PC-9 (cell line): ENCODE measurements at regions of chr6 and their contacts with region 1.

Region 1: DNA sequence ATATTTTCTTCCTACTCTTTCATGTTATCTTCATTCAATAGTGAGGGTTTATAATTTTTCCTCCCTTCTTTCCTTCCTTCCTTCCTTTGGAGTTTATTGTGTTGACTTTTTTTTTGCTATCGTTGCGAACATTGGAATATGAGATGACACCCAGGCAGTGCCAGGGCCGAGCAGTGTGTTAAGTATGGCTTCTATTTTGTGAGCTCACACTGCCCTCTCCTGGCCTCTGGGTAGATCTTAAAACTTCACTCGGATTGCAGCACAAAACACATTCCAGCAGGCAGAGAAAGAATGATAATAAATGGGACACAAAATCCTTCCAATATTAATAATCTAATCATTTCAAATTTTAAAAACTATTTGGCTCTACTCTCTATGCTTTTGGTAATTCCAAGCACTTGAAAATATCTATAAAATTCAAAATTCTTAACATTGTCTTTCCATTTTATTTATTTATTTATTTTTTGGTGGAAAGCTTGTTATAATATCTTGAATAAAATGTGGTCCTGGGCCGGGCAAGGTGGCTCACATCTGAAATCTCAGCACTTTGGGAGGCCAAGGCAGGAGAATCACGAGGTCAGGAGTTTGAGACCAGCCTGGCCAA is 147.4 kb upstream of the OLIG3 start:
- DNase-seq: peak; percentile 50 to 69
- H3K4me3 ChIP-seq: no peak overlapping the region
- H3K27ac ChIP-seq: no peak overlapping the region
- H3K4me1 ChIP-seq: peaks cover 15% of the 10 kb centered on the region
- H3K27me3 ChIP-seq: no peaks in the 10 kb centered on the region
- CTCF ChIP-seq: peak; percentile 96

Region 2: GRCh38 chr6:136822376-136823127 is 819.0 kb before region 1 on chr6 and contains the start of gene PEX7:
- CTCF ChIA-PET with region 1: no interaction called
- POLR2A ChIA-PET with region 1: no interaction called
- intact Hi-C with region 1: loop called (anchors 10 kb)
- DNase-seq: peak; percentile 81 to 87
- H3K4me3 ChIP-seq: peak within 1 kb of the TSS; percentile 69
- H3K27ac ChIP-seq: peak within 1 kb of the TSS; percentile 47
- H3K4me1 ChIP-seq: peaks cover 15% of the 10 kb centered on the region
- H3K27me3 ChIP-seq: no peaks in the 10 kb centered on the region
- CTCF ChIP-seq: peak; percentile 72
- total RNA-seq, gene PEX7: 5.6 and 11.5 TPM in 2 replicates

Region 3: GRCh38 chr6:136967876-136968752 is 673.5 kb before region 1 on chr6:
- CTCF ChIA-PET with region 1: no interaction called
- POLR2A ChIA-PET with region 1: no interaction called
- intact Hi-C with region 1: loop called (anchors 2 kb)
- DNase-seq: peak; percentile 68 to 80
- H3K4me3 ChIP-seq: no peak overlapping the region
- H3K27ac ChIP-seq: peak overlapping the region; percentile 97
- H3K4me1 ChIP-seq: peaks cover 37% of the 10 kb centered on the region
- H3K27me3 ChIP-seq: no peaks in the 10 kb centered on the region
- CTCF ChIP-seq: peak; percentile 90

Region 4: GRCh38 chr6:137094411-137095008 is 547.1 kb before region 1 on chr6:
- CTCF ChIA-PET with region 1: interaction called, 6 read pairs
- POLR2A ChIA-PET with region 1: no interaction called
- intact Hi-C with region 1: loop called (anchors 1 kb)
- DNase-seq: peak; percentile 53 to 82
- H3K4me3 ChIP-seq: no peak overlapping the region
- H3K27ac ChIP-seq: no peak overlapping the region
- H3K4me1 ChIP-seq: peaks cover 5% of the 10 kb centered on the region
- H3K27me3 ChIP-seq: no peaks in the 10 kb centered on the region
- CTCF ChIP-seq: peak; percentile 92

Region 5: DNA sequence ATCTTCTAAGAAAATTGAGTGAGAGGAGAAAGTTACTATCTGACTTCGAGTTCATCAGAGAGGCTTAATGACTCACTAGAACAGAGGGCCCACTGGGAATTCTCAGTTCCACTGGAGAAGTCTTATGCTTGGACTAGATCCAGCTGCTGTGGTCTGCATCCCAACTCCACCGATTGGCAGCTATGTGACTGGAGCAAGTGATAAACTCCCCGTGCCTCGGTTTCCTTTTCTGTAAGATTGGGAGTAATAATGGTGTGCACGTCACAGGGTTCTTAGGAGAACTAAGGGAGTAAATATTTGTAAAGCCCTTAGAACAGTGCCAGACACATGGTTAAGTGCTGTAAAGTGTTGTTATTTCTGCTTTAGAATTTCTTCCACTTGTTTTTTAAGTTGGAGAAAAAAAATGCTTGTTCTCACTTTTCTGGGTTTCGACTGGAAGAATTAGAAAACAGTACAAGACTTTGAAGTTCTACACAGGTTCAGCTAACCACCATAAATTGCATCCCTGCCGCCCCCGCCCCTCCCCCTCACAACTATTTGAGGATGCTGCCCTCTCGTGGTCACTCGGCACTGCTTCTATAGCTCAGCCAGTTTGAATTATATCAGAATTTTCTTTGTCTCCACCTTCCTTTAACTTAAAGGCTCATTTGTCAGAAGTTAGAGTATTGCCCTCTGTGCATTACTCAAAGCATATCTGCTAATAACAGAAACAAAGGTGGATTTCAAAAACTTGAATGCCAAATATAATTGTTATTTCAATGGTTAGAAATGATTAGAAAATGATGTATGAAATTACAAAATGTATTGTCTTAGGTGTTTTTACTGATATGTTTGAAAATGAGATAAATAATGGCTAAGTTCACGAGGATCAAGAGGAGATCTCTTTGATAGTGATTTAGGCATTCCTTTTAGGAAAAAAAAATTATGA is 327.4 kb before region 1 on chr6:
- CTCF ChIA-PET with region 1: interaction called, 12 read pairs
- POLR2A ChIA-PET with region 1: no interaction called
- intact Hi-C with region 1: loop called (anchors 1 kb)
- DNase-seq: peak; percentile 23 to 57
- H3K4me3 ChIP-seq: no peak overlapping the region
- H3K27ac ChIP-seq: no peak overlapping the region
- H3K4me1 ChIP-seq: peaks cover 11% of the 10 kb centered on the region
- H3K27me3 ChIP-seq: no peaks in the 10 kb centered on the region
- CTCF ChIP-seq: peak; percentile 99